Activated B cell treated with CpG ODN at 0.5 μM for 24 hours (primary cell): ENCODE measurements at regions of chr7 and their contacts with region 1.

Region 1: DNA sequence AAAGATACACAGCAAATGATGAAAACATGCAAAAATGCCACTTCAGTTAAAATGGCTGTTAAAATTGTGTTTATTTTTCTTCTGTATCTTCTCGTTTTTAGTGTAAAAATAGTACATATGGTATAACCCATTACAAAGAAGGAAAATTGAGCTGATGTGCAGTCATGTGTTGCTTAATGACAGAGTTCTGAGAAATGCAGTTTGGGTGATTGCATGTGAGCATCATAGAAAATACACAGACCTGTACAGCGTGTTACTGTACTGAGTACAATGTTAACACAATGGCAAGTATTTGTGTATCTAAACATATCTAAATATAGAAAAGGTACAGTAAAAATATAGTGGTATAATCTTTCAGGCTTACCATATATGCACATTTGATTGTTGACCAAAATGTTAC is 7.3 kb downstream of the DMTF1 start:
- DNase-seq: no peak
- ATAC-seq: no peak
- H3K4me3 Mint-ChIP-seq: no peak overlapping the region
- H3K27ac Mint-ChIP-seq: no peak overlapping the region
- H3K4me1 Mint-ChIP-seq: peaks cover 53% of the 10 kb centered on the region
- H3K27me3 Mint-ChIP-seq: no peaks in the 10 kb centered on the region
- CTCF ChIP-seq: no peak

Region 2: GRCh38 chr7:86814661-86815379 is 344.7 kb before region 1 on chr7:
- CTCF ChIA-PET with region 1: no interaction called
- POLR2A ChIA-PET with region 1: no interaction called
- intact Hi-C with region 1: no loop called
- DNase-seq: no peak
- ATAC-seq: no peak
- H3K4me3 Mint-ChIP-seq: no peak overlapping the region
- H3K27ac Mint-ChIP-seq: no peak overlapping the region
- H3K4me1 Mint-ChIP-seq: no peaks in the 10 kb centered on the region
- H3K27me3 Mint-ChIP-seq: peaks cover 5% of the 10 kb centered on the region
- CTCF ChIP-seq: no peak

Region 3: GRCh38 chr7:86889501-86889900 is 270.0 kb before region 1 on chr7:
- CTCF ChIA-PET with region 1: no interaction called
- POLR2A ChIA-PET with region 1: no interaction called
- intact Hi-C with region 1: no loop called
- DNase-seq: no peak
- ATAC-seq: no peak
- H3K4me3 Mint-ChIP-seq: no peak overlapping the region
- H3K27ac Mint-ChIP-seq: no peak overlapping the region
- H3K4me1 Mint-ChIP-seq: no peaks in the 10 kb centered on the region
- H3K27me3 Mint-ChIP-seq: no peaks in the 10 kb centered on the region
- CTCF ChIP-seq: no peak

Region 4: GRCh38 chr7:87173471-87173870 is 13.9 kb after region 1 on chr7:
- CTCF ChIA-PET with region 1: no interaction called
- POLR2A ChIA-PET with region 1: interaction called, 3 read pairs
- intact Hi-C with region 1: loop called (anchors 2 kb)
- DNase-seq: no peak
- ATAC-seq: no peak
- H3K4me3 Mint-ChIP-seq: no peak overlapping the region
- H3K27ac Mint-ChIP-seq: peak overlapping the region; percentile 9
- H3K4me1 Mint-ChIP-seq: peaks cover 4% of the 10 kb centered on the region
- H3K27me3 Mint-ChIP-seq: no peaks in the 10 kb centered on the region
- CTCF ChIP-seq: no peak